ENCODE measurements at regions of chr12 and their contacts with region 1.

Region 1: DNA sequence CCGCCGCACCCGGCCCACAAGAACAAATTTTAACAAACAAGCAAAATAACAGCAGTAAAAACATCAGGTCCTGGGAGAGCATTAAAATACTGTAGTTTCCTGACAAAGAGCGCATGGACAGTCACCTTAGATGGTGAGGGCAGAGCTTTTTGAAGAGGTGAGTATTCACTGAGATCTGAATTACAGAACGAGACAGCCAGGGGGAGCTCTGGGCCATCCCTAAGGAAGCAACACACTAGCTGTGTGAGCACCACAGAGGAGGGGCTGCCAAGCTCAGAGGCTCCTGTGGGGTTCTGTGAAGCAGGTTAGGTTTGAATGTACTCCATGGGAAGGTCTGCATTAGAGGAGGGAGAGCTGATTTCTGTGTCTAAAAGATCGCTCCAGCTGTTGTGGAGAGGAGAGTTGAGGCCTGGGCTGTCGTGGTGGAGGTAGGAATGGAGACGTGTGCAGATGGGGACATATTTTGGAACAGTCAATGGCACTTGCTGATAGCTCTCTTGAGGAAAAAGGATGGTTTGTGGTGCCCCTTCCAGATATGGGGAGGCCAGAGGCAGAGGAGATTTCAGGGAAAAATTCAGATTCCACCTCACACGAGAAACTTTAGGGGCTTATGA is 72.9 kb downstream of the TRAFD1 start:
- DNase-seq: no peak
- H3K4me3 ChIP-seq: no peak overlapping the region
- H3K27me3 ChIP-seq: no peaks in the 10 kb centered on the region
- CTCF ChIP-seq: peak; percentile 73

Region 2: DNA sequence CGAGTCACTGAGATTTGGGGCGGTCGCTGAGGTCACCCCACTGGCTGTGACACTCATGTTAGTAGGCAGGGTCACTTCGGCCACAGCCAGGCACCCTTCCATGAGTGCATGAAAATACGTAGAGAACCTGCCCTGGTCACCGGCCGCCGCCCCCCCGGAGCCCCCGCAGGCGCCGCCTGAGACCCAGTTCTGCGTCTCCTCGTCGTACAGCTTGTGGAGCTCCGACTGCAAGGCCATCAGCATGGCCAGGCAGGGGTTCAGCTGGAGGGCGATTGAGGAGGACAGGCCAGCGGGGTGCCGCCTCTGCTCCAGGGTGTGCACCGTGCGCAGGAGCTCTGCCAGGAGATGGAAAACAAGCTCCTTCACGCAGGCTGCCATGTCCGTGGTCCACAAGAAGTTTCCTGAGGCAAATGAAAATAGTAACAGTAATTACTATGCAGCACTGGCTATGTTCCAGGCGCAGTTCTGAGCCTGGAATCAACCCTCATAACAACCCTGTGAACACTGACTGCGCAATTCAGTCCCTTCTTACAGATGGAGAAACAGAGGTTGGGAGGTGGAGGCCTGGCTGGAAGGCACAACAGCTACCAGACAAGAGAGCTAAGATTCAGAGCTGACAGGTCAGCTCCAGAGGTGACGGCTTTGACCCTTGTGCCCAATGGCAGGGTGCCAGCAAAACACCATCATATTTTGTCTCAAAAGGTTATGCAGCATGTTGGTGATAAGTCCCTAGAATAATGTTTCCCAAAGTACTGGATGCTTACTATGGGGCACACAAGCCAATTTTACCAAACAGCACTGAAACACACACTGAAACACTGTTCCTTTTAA is 12.9 kb before region 1 on chr12:
- CTCF ChIA-PET with region 1: interaction called, 18 read pairs
- POLR2A ChIA-PET with region 1: no interaction called
- DNase-seq: no peak
- H3K4me3 ChIP-seq: no peak overlapping the region
- H3K27me3 ChIP-seq: no peaks in the 10 kb centered on the region
- CTCF ChIP-seq: no peak

Region 3: DNA sequence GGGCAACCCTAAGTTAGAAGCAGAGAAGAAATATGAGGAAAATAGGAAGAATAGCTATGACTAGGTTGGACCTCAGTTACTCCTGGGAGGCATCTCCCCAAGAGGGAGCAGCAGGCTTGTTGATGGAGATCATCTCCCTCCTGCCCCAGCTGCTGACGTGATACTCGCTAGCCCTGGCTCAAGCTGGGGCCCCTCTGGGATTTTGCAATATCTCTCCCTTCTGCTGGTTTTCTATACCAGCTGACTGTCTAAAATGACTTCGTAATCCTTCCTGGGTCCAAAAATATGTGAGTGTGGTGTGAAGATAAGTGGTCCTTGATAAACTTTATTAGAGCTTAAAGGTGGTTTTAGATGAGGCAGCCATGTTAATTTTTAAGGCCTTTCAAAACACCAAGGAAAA is 188.5 kb after region 1 on chr12:
- CTCF ChIA-PET with region 1: interaction called, 90 read pairs
- POLR2A ChIA-PET with region 1: no interaction called
- DNase-seq: no peak
- H3K4me3 ChIP-seq: no peak overlapping the region
- H3K27me3 ChIP-seq: no peaks in the 10 kb centered on the region
- CTCF ChIP-seq: no peak

Region 4: GRCh38 chr12:112409064-112409905 is 211.1 kb after region 1 on chr12 and contains the start of gene RPL6:
- CTCF ChIA-PET with region 1: interaction called, 17 read pairs
- POLR2A ChIA-PET with region 1: no interaction called
- DNase-seq: peak; percentile 71
- H3K4me3 ChIP-seq: peak within 1 kb of the TSS; percentile 82
- H3K27me3 ChIP-seq: no peaks in the 10 kb centered on the region
- CTCF ChIP-seq: no peak
- polyA plus RNA-seq, gene RPL6: 1,566 and 1,961 TPM in 2 replicates